K562 (cell line): ENCODE measurements at regions of chr4 and their contacts with region 1.

Region 1: GRCh38 chr4:153142700-153143438 is 61.4 kb upstream of the TRIM2 start:
- DNase-seq: peak in 2 of 4 experiments; percentile 68 to 74
- ATAC-seq: peak; percentile 84
- H3K4me3 ChIP-seq: no peak overlapping the region
- H3K27ac ChIP-seq: no peak overlapping the region
- H3K4me1 ChIP-seq: peaks cover 2 to 18% of the 10 kb centered on the region in 2 experiments; a peak in 2 of 5 replicates
- H3K27me3 ChIP-seq: peaks cover 0 to 4% of the 10 kb centered on the region in 2 experiments; a peak in 1 of 5 replicates
- CTCF ChIP-seq: peak; percentile 68 to 89 (median 76)
- EP300 ChIP-seq: peak; percentile 17; the same call in 1 of the 2 replicates
- POLR2A ChIP-seq: no peak
- RAD21 ChIP-seq: peak; percentile 83 to 85

Region 2: DNA sequence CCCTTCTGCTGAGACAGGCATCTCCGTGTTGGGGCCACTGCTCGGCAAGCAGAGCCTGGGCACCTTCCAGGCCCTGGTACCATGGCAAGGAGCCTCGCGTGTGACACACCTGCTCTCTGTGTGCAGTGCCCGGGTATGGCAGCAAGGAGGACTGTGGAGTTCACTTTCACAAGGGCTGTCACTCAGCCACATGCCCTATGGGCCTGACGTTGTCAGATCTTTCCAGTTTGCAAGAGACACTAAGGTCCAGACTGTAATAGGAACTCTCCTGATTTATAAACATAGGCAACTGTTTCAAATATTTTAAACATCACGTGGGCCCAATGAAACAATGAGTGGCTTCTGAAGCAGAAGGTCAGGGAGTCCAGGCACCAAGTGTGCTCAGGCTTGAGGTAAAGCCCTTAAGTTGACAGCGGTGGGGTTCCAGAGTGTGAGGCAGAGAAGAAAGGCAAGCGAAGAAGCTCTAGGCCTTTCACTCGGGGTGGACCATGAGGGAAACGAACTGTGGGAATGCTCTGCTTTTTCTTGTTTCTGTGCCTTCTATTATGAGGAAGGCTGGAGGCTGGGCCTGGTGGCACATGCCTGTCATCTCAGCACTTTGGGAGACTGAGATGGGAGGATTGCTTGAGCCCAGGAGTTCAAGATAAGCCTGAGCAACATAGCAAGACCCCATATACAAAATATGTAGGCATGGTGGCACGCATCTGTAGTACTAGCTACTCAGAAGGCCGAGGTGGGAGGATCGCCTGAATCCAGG is 47.2 kb before region 1 on chr4:
- CTCF ChIA-PET with region 1: no interaction called
- POLR2A ChIA-PET with region 1: no interaction called
- in situ Hi-C with region 1: no loop called
- intact Hi-C with region 1: no loop called
- DNase-seq: no peak
- ATAC-seq: no peak
- H3K4me3 ChIP-seq: no peak overlapping the region
- H3K27ac ChIP-seq: no peak overlapping the region
- H3K4me1 ChIP-seq: no peaks in the 10 kb centered on the region
- H3K27me3 ChIP-seq: peaks cover 11 to 30% of the 10 kb centered on the region in 2 experiments; a peak in 4 of 5 replicates
- CTCF ChIP-seq: no peak
- EP300 ChIP-seq: no peak
- POLR2A ChIP-seq: no peak
- RAD21 ChIP-seq: no peak

Region 3: GRCh38 chr4:153204247-153205027 is 61.6 kb after region 1 on chr4 and contains the start of gene TRIM2:
- CTCF ChIA-PET with region 1: no interaction called
- POLR2A ChIA-PET with region 1: no interaction called
- in situ Hi-C with region 1: no loop called
- intact Hi-C with region 1: loop called (anchors 1 kb)
- DNase-seq: peak; percentile 59 to 73 (median 65)
- ATAC-seq: peak; percentile 86
- H3K4me3 ChIP-seq: no peak within 1 kb of the TSS
- H3K27ac ChIP-seq: no peak within 1 kb of the TSS
- H3K4me1 ChIP-seq: peaks cover 5% of the 10 kb centered on the region in 2 experiments
- H3K27me3 ChIP-seq: peaks cover 4 to 19% of the 10 kb centered on the region in 2 experiments; a peak in 3 of 5 replicates
- CTCF ChIP-seq: no peak
- EP300 ChIP-seq: no peak
- POLR2A ChIP-seq: no peak
- RAD21 ChIP-seq: no peak
- polyA plus RNA-seq, gene TRIM2: 0.01 TPM

Region 4: DNA sequence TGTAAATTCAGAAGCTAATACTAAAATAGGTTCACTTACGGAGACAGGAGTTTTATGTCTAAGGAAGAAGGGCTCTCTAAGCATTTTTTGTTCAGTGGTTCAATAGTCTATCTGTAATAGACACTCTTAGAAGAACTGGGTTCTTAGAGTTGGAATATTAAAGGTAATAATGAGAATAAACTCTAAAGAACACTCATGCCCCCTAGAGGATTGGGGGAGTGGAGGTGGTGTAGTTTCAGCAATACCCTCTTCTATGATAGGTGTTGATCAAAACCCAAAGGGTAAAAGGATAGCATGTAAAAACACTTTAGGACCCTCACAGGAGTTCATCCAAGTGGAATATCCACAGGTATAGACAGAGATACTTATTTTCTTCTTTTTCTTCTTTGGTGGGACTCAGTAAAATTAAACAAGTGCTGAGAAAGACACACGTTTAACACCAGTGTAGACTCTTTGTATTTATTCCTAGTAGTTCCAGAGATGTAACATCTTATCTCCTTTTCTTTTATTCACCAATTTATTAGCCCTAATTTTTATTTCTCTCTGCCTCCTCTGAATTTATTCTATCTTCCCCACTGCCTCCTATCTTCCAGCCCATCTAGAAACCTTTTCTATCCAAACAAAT is 175.9 kb after region 1 on chr4:
- CTCF ChIA-PET with region 1: interaction called, 4 read pairs
- POLR2A ChIA-PET with region 1: no interaction called
- in situ Hi-C with region 1: loop called (anchors 10 kb)
- intact Hi-C with region 1: loop called (anchors 1 kb)
- DNase-seq: peak; percentile 18 to 51 (median 34)
- ATAC-seq: peak; percentile 90
- H3K4me3 ChIP-seq: no peak overlapping the region
- H3K27ac ChIP-seq: no peak overlapping the region
- H3K4me1 ChIP-seq: no peaks in the 10 kb centered on the region
- H3K27me3 ChIP-seq: peaks cover 4 to 11% of the 10 kb centered on the region in 2 experiments; a peak in 4 of 5 replicates
- CTCF ChIP-seq: peak; percentile 46 to 74 (median 55); a peak in 3 of 6 replicates
- EP300 ChIP-seq: no peak
- POLR2A ChIP-seq: no peak
- RAD21 ChIP-seq: peak; percentile 48 to 71

Region 5: DNA sequence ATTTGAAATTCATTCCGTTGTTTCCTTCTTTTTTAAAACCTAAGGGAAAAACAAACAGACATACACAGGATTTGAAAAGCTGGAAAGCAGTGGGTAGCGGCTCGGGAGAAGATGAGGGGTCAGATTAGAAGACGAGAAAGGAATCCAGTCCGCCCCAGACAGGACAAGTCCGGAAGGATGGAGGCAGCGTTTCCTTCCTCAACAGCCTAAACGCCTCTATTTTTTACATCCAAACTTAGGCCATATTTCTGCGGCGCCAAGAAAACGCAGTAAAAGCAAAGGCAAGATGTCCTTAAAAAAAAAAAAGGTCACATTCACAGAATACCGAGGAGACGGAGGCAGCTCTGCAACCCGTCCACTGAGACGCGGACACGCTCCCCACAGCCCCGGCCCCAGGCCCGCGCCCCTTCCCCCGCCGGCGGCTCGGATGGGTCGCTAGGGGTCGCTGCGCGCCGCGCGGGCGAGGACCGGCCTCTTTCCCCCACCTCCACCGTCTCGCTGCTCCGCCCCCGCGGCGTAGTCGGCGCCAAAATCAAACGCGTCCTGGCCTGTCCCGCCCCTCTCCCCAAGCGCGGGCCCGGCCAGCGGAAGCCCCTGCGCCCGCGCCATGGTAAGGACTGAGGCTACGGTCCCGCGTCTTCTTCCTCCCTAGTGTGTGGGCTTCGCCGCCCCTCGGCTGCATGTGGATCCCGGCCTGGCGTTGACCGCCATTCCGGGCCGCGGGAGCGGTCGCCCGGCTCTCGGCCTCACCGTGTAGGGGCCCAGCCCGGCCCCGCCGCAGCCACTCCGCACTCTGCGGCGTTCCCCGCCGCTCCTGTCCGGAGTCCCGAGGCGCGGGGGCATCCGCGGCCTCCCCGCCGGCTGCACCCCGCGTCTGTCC is 201.5 kb after region 1 on chr4 and contains the start of gene MND1:
- CTCF ChIA-PET with region 1: interaction called, 3 read pairs
- POLR2A ChIA-PET with region 1: no interaction called
- in situ Hi-C with region 1: no loop called
- intact Hi-C with region 1: loop called (anchors 1 kb)
- DNase-seq: peak; percentile 92 to 95 (median 93)
- ATAC-seq: peak; percentile 92
- H3K4me3 ChIP-seq: peak within 1 kb of the TSS; percentile 85
- H3K27ac ChIP-seq: peak within 1 kb of the TSS; percentile 92
- H3K4me1 ChIP-seq: peaks cover 16 to 33% of the 10 kb centered on the region in 2 experiments
- H3K27me3 ChIP-seq: no peaks in the 10 kb centered on the region
- CTCF ChIP-seq: peak; percentile 76 to 89 (median 81)
- EP300 ChIP-seq: no peak
- POLR2A ChIP-seq: peak; percentile 90
- RAD21 ChIP-seq: peak; percentile 69 to 71
- polyA plus RNA-seq, gene MND1: 59.9 to 74.8 TPM

Region 6: DNA sequence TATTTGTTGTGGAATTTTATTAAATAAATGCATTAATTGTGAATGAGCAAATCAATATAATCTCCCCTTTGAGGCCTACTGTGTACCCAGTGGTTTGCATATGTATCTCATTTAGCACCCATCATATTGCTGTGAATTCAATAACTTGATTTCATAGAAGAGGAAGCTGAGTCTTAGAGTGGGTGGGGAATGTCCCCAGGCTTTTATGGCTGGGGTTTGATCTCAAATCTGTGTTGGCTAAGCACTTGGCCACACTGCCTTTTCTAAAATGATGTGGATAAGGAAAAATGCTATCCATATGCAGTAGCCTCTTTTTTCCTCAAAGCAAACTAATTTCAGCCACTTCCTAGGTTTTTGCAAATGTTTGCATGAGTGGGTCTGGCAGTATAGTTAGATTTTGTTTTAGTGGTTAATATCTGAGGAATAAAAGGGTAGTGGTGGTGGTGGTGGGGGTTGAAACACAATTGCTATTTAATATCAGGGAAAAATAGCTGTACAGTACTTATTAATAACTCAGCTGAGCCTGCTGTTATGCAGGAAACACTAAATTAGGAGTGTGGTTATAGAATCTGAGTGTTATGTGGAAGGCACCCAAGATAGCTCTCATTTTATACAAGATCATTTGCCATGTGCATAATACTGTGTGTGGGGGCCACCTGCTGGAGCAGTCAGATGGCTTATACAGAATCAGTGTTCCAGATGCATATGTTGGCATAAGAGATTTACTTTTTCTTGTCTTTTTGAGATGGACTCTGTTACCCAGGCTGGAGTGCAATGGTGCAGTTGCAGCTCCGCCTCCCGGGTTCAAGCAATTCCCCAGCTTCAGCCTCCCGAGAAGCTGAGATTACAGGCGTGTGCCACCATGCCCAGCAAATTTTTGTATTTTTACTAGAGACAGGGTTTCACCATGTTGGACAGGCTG is 431.3 kb after region 1 on chr4:
- CTCF ChIA-PET with region 1: interaction called, 6 read pairs
- POLR2A ChIA-PET with region 1: no interaction called
- in situ Hi-C with region 1: no loop called
- intact Hi-C with region 1: loop called (anchors 1 kb)
- DNase-seq: peak in 2 of 4 experiments; percentile 22 to 48
- ATAC-seq: peak; percentile 87
- H3K4me3 ChIP-seq: no peak overlapping the region
- H3K27ac ChIP-seq: no peak overlapping the region
- H3K4me1 ChIP-seq: peaks cover 0 to 5% of the 10 kb centered on the region in 2 experiments; a peak in 1 of 5 replicates
- H3K27me3 ChIP-seq: no peaks in the 10 kb centered on the region
- CTCF ChIP-seq: peak; percentile 49 to 75 (median 50); a peak in 5 of 6 replicates
- EP300 ChIP-seq: no peak
- POLR2A ChIP-seq: no peak
- RAD21 ChIP-seq: peak; percentile 80 to 90

Region 7: DNA sequence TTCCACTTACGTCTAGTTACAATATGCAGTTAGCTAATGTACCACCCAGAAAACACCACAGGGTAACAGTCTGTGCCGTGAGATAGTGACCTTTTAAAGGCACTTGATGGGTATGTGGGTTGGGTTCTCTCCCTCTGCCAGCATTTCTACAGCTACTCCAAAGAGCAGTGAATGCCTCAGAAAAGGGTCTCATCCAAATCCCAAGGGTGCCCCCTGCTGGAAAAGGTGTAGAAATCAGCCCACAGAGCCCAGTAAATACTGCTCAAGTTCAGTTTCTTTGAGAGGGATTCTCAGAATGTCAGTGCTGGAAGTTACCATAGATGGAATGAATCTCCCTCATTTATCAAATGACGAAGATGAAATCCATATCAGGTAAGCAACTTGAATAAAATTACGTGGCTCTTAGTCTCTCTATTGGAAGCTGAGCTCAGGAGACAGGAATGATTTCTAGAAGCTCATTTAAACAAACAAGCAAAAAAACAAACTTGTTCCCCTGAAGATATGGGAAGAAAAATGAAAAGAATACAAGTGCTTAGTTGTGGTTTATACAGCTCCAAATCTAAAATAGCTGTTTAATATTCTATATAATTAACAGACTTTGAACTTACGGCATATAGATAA is 607.4 kb after region 1 on chr4:
- CTCF ChIA-PET with region 1: interaction called, 3 read pairs
- POLR2A ChIA-PET with region 1: interaction called, 5 read pairs
- in situ Hi-C with region 1: no loop called
- intact Hi-C with region 1: loop called (anchors 2 kb)
- DNase-seq: peak; percentile 29 to 78 (median 48)
- ATAC-seq: peak; percentile 92
- H3K4me3 ChIP-seq: no peak overlapping the region
- H3K27ac ChIP-seq: no peak overlapping the region
- H3K4me1 ChIP-seq: no peaks in the 10 kb centered on the region
- H3K27me3 ChIP-seq: peaks cover 4 to 27% of the 10 kb centered on the region in 2 experiments
- CTCF ChIP-seq: peak; percentile 69 to 81 (median 78); a peak in 5 of 6 replicates
- EP300 ChIP-seq: no peak
- POLR2A ChIP-seq: no peak
- RAD21 ChIP-seq: peak; percentile 46 to 77